CD8-positive, alpha-beta T cell (primary cell): ENCODE measurements at regions of chr1 and their contacts with region 1.

Region 1: GRCh38 chr1:155084722-155085503 is 6.3 kb downstream of the EFNA3 start:
- DNase-seq: peak; percentile 80 to 94 (median 92)
- ATAC-seq: peak; percentile 73
- H3K4me3 ChIP-seq: peak overlapping the region; percentile 82 to 92
- H3K4me3 Mint-ChIP-seq: peak overlapping the region; percentile 95
- H3K27ac ChIP-seq: peak overlapping the region; percentile 57 to 85
- H3K27ac Mint-ChIP-seq: peak overlapping the region; percentile 90
- H3K4me1 ChIP-seq: peaks cover 54% of the 10 kb centered on the region
- H3K4me1 Mint-ChIP-seq: peaks cover 39% of the 10 kb centered on the region
- H3K27me3 ChIP-seq: peaks cover 39 to 44% of the 10 kb centered on the region in 2 experiments
- H3K27me3 Mint-ChIP-seq: peaks cover 30% of the 10 kb centered on the region
- CTCF ChIP-seq: peak; percentile 84

Region 2: DNA sequence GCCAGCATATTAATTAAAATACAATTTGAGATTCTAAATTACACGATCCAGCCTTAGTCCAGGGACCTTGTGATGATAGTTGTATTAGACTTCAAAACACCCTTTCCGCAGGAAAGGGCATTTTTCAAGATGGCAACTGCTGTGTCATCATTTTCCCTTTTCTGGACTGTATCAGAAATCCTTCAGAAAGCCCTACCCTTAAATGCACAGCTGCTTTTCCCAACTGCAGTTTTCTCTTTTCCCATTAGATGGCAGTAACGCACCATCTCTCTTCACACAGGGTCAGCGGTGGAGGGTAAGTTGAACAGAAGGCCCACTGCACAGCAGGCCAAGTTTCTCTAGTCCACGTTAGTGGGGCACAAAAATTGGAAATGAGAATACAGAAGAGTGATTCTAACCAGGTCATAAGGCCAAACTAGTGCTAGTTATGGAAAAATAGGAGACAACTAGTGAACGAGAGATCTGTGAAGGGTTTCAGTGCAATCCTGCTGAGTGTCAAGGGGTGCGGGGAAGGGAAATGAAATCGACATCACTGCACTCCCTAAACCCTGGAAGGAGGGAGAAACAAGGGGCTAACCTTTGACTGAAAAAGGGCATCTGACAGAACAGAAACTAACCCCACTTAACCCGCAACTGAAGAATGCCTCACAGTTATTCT is 605.0 kb before region 1 on chr1:
- CTCF ChIA-PET with region 1: no interaction called
- POLR2A ChIA-PET with region 1: no interaction called
- intact Hi-C with region 1: loop called in 1 of 2 experiments (anchors 2 kb)
- DNase-seq: peak in 8 of 9 experiments; percentile 12 to 80 (median 58)
- ATAC-seq: peak; percentile 91
- H3K4me3 ChIP-seq: no peak overlapping the region
- H3K4me3 Mint-ChIP-seq: no peak overlapping the region
- H3K27ac ChIP-seq: no peak overlapping the region
- H3K27ac Mint-ChIP-seq: no peak overlapping the region
- H3K4me1 ChIP-seq: peaks cover 3% of the 10 kb centered on the region
- H3K4me1 Mint-ChIP-seq: peaks cover 9% of the 10 kb centered on the region
- H3K27me3 ChIP-seq: no peaks in the 10 kb centered on the region
- H3K27me3 Mint-ChIP-seq: peaks cover 3% of the 10 kb centered on the region
- CTCF ChIP-seq: peak; percentile 98

Region 3: GRCh38 chr1:154819628-154820590 is 265.0 kb before region 1 on chr1:
- CTCF ChIA-PET with region 1: no interaction called
- POLR2A ChIA-PET with region 1: no interaction called
- intact Hi-C with region 1: no loop called
- DNase-seq: peak in 6 of 9 experiments; percentile 13 to 62 (median 38)
- ATAC-seq: peak; percentile 77
- H3K4me3 ChIP-seq: no peak overlapping the region
- H3K4me3 Mint-ChIP-seq: no peak overlapping the region
- H3K27ac ChIP-seq: peak overlapping the region in 1 of 2 experiments; percentile 53
- H3K27ac Mint-ChIP-seq: no peak overlapping the region
- H3K4me1 ChIP-seq: no peaks in the 10 kb centered on the region
- H3K4me1 Mint-ChIP-seq: peaks cover 14% of the 10 kb centered on the region
- H3K27me3 ChIP-seq: no peaks in the 10 kb centered on the region
- H3K27me3 Mint-ChIP-seq: no peaks in the 10 kb centered on the region
- CTCF ChIP-seq: no peak

Region 4: DNA sequence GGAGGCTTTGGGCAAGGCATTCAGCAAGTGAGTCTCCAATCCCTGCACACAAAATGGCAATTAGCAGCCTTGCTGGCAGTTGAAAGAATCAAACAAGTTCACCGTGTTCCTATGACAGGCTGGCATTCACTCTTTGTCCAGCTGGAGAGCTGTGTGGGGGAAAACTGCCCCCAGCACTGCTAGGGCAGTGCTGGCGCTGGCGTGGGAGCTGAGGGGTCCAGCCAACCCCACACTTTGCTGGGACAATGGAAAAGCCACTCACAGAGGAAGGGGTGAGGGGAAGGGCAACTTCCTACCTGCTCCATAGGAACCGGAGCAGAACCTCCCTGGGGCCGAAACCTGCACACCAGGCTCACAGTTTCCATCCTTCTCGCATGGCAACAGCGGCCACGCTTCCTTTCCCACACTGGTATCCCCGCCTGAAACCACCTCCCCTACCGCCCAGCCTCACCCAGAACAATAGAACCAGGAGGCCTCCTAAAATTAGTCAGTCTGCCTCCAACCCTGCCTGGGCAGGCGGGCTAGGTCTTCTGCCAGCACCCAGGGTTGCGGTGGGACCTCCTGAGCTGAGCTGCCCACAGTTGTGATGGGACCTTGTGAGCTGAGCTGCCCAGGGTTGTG is 188.0 kb before region 1 on chr1:
- CTCF ChIA-PET with region 1: no interaction called
- POLR2A ChIA-PET with region 1: no interaction called
- intact Hi-C with region 1: no loop called
- DNase-seq: no peak
- ATAC-seq: no peak
- H3K4me3 ChIP-seq: no peak overlapping the region
- H3K4me3 Mint-ChIP-seq: no peak overlapping the region
- H3K27ac ChIP-seq: no peak overlapping the region
- H3K27ac Mint-ChIP-seq: no peak overlapping the region
- H3K4me1 ChIP-seq: no peaks in the 10 kb centered on the region
- H3K4me1 Mint-ChIP-seq: no peaks in the 10 kb centered on the region
- H3K27me3 ChIP-seq: no peaks in the 10 kb centered on the region
- H3K27me3 Mint-ChIP-seq: peaks cover 4% of the 10 kb centered on the region
- CTCF ChIP-seq: no peak

Region 5: GRCh38 chr1:154955718-154956543 is 129.0 kb before region 1 on chr1 and contains the start of gene PBXIP1:
- CTCF ChIA-PET with region 1: interaction called, 5 read pairs
- POLR2A ChIA-PET with region 1: no interaction called
- intact Hi-C with region 1: loop called in 1 of 2 experiments (anchors 1 kb)
- DNase-seq: peak; percentile 65 to 96 (median 84)
- ATAC-seq: peak; percentile 40
- H3K4me3 ChIP-seq: peak within 1 kb of the TSS; percentile 71 to 76
- H3K4me3 Mint-ChIP-seq: peak within 1 kb of the TSS; percentile 99
- H3K27ac ChIP-seq: peak within 1 kb of the TSS; percentile 98
- H3K27ac Mint-ChIP-seq: peak within 1 kb of the TSS; percentile 99
- H3K4me1 ChIP-seq: peaks cover 60% of the 10 kb centered on the region
- H3K4me1 Mint-ChIP-seq: peaks cover 76% of the 10 kb centered on the region
- H3K27me3 ChIP-seq: no peaks in the 10 kb centered on the region
- H3K27me3 Mint-ChIP-seq: no peaks in the 10 kb centered on the region
- CTCF ChIP-seq: no peak
- total RNA-seq, gene PBXIP1: 315 to 319 TPM

Region 6: GRCh38 chr1:155044812-155045690 is 39.9 kb before region 1 on chr1:
- CTCF ChIA-PET with region 1: interaction called, 61 read pairs
- POLR2A ChIA-PET with region 1: no interaction called
- intact Hi-C with region 1: loop called (anchors 1 kb)
- DNase-seq: peak in 8 of 9 experiments; percentile 42 to 80 (median 64)
- ATAC-seq: peak; percentile 94
- H3K4me3 ChIP-seq: no peak overlapping the region
- H3K4me3 Mint-ChIP-seq: no peak overlapping the region
- H3K27ac ChIP-seq: no peak overlapping the region
- H3K27ac Mint-ChIP-seq: no peak overlapping the region
- H3K4me1 ChIP-seq: no peaks in the 10 kb centered on the region
- H3K4me1 Mint-ChIP-seq: peaks cover 4% of the 10 kb centered on the region
- H3K27me3 ChIP-seq: no peaks in the 10 kb centered on the region
- H3K27me3 Mint-ChIP-seq: peaks cover 3% of the 10 kb centered on the region
- CTCF ChIP-seq: peak; percentile 64

Region 7: GRCh38 chr1:155127105-155127964 is 42.4 kb after region 1 on chr1 and contains the start of gene EFNA1:
- CTCF ChIA-PET with region 1: interaction called, 11 read pairs
- POLR2A ChIA-PET with region 1: no interaction called
- intact Hi-C with region 1: loop called in 1 of 2 experiments (anchors 5 kb)
- DNase-seq: peak in 7 of 9 experiments; percentile 36 to 64 (median 48)
- ATAC-seq: peak; percentile 47
- H3K4me3 ChIP-seq: peak within 1 kb of the TSS; percentile 53 to 59
- H3K4me3 Mint-ChIP-seq: peak within 1 kb of the TSS; percentile 86
- H3K27ac ChIP-seq: no peak within 1 kb of the TSS
- H3K27ac Mint-ChIP-seq: peak within 1 kb of the TSS; percentile 87
- H3K4me1 ChIP-seq: peaks cover 36% of the 10 kb centered on the region
- H3K4me1 Mint-ChIP-seq: peaks cover 45% of the 10 kb centered on the region
- H3K27me3 ChIP-seq: peaks cover 0 to 2% of the 10 kb centered on the region in 2 experiments
- H3K27me3 Mint-ChIP-seq: no peaks in the 10 kb centered on the region
- CTCF ChIP-seq: no peak
- total RNA-seq, gene EFNA1: 7.3 to 10.4 TPM

Region 8: DNA sequence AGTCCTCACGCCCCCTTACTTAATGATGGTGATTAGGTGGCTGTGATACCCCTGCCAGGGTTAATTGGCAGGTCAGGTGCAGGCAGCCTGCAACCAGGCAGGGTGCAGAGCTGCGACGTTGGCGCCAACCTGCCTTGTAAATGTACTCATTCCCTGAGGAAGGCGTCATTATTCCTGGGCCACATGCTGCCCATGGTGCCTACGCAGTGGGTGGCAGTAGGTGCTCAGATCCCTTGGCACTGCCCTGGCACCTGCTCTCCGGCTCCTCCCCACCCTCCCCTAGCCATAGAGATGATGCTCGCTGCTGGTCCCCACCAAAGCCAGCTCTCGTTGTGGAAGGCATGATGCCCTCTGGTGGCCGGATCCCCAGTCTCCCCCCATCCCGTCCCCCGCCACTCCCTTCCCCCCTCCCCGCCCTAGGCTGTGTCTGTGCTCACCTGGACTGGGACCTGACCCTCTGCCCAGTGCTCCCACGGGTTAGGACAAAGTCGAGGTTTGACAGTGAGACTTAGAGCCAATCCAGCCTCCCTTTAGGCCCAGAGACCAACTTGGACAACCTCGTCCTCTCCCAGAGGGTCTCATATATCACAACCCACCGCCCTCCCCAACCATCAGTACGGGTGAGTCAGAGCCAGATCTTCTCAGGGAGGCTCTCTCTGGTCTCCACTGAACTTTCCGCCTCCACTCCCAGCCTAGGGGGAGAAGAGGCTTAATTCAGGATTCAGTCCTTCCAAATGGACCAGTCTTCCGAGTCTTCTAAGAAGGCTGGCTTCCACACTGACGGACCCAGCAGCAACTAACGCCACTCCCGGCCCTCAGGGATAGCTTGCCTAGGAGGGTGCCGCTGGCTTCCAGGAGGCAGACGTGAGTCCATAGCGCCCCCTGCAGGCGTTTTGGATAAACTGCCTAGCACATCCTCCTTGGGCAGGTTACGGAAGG is 82.5 kb after region 1 on chr1:
- CTCF ChIA-PET with region 1: interaction called, 270 read pairs
- POLR2A ChIA-PET with region 1: no interaction called
- intact Hi-C with region 1: loop called in 1 of 2 experiments (anchors 2 kb)
- DNase-seq: peak; percentile 69 to 91 (median 86)
- ATAC-seq: peak; percentile 80
- H3K4me3 ChIP-seq: peak overlapping the region in 1 of 2 experiments; percentile 28
- H3K4me3 Mint-ChIP-seq: peak overlapping the region; percentile 60
- H3K27ac ChIP-seq: no peak overlapping the region
- H3K27ac Mint-ChIP-seq: no peak overlapping the region
- H3K4me1 ChIP-seq: peaks cover 19% of the 10 kb centered on the region
- H3K4me1 Mint-ChIP-seq: peaks cover 22% of the 10 kb centered on the region
- H3K27me3 ChIP-seq: no peaks in the 10 kb centered on the region
- H3K27me3 Mint-ChIP-seq: no peaks in the 10 kb centered on the region
- CTCF ChIP-seq: peak; percentile 64